PC-3 (cell line): ENCODE measurements at regions of chr1 and their contacts with region 1.

Region 1: DNA sequence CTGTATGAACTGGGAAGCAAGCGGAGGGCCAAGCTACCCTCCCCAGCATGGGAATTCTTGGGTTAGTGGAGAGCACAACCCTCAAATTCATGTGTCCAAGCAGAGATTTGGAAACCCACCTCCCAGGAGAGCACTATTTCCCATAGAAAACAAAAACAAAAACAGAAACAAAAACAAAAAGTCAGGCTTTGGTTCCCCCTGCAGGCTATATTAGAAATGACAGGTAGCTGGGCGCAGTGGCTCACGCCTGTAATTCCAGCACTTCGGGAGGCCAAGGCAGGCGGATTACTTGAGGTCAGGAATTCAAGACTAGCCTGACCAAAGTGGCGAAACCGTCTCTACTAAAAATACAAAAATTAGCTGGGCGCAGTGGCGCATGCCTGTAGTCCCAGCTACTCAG is 10.8 kb downstream of the MINDY1 start:
- DNase-seq: peak; percentile 58
- ATAC-seq: peak; percentile 35
- H3K4me3 ChIP-seq: no peak overlapping the region
- H3K27ac ChIP-seq: no peak overlapping the region
- H3K4me1 ChIP-seq: peaks cover 22% of the 10 kb centered on the region
- H3K27me3 ChIP-seq: no peaks in the 10 kb centered on the region
- CTCF ChIP-seq: peak; percentile 86

Region 2: DNA sequence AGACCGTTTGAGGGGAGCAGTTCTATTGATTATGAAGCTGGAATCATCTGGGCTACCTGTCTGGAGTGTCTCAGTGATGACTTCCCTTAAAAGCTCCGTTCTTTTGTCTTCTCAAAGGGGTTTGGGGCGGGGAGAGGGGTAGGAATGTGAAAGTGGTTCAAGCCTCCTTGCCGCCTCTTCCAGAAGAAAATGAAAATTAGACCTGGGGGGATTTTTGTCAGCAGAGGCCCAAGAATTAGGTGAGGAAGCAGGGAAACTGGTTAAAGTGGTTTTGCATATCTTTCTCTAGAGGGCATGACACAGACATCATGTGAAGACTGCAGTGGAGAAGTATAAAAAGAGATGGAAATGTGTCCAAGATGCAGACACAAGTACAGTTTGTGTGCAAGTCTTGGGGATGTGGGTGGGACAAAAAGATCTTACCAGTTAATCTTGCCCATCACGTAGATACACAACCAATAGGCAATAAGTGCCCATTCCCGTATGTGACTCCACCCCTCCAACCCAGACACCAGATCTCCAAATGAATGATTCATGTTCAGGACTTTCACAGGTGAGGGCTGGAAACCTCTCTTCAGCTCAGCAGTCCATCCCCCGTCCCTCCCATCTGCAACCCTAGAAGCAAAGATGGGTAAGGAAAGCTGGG is 1058.7 kb before region 1 on chr1:
- CTCF ChIA-PET with region 1: no interaction called
- POLR2A ChIA-PET with region 1: no interaction called
- intact Hi-C with region 1: no loop called
- DNase-seq: peak; percentile 96
- ATAC-seq: peak; percentile 71
- H3K4me3 ChIP-seq: peak overlapping the region; percentile 75
- H3K27ac ChIP-seq: peak overlapping the region; percentile 90
- H3K4me1 ChIP-seq: peaks cover 43% of the 10 kb centered on the region
- H3K27me3 ChIP-seq: no peaks in the 10 kb centered on the region
- CTCF ChIP-seq: 0 out of 2 replicates have a peak, but pooled peaks have one; percentile 16

Region 3: GRCh38 chr1:150321826-150322166 is 674.1 kb before region 1 on chr1:
- CTCF ChIA-PET with region 1: no interaction called
- POLR2A ChIA-PET with region 1: interaction called, 15 read pairs
- intact Hi-C with region 1: no loop called
- DNase-seq: no peak
- ATAC-seq: no peak
- H3K4me3 ChIP-seq: peak overlapping the region; percentile 85
- H3K27ac ChIP-seq: peak overlapping the region; percentile 80
- H3K4me1 ChIP-seq: peaks cover 7% of the 10 kb centered on the region
- H3K27me3 ChIP-seq: no peaks in the 10 kb centered on the region
- CTCF ChIP-seq: no peak

Region 4: GRCh38 chr1:150561974-150562445 is 433.9 kb before region 1 on chr1:
- CTCF ChIA-PET with region 1: interaction called, 5 read pairs
- POLR2A ChIA-PET with region 1: no interaction called
- intact Hi-C with region 1: loop called (anchors 10 kb)
- DNase-seq: peak; percentile 91
- ATAC-seq: peak; percentile 68
- H3K4me3 ChIP-seq: peak overlapping the region; percentile 69
- H3K27ac ChIP-seq: peak overlapping the region; percentile 96
- H3K4me1 ChIP-seq: peaks cover 37% of the 10 kb centered on the region
- H3K27me3 ChIP-seq: no peaks in the 10 kb centered on the region
- CTCF ChIP-seq: no peak

Region 5: GRCh38 chr1:150909585-150910180 is 86.2 kb before region 1 on chr1:
- CTCF ChIA-PET with region 1: no interaction called
- POLR2A ChIA-PET with region 1: no interaction called
- intact Hi-C with region 1: no loop called
- DNase-seq: no peak
- ATAC-seq: no peak
- H3K4me3 ChIP-seq: no peak overlapping the region
- H3K27ac ChIP-seq: no peak overlapping the region
- H3K4me1 ChIP-seq: peaks cover 4% of the 10 kb centered on the region; the same call in 1 of the 2 replicates
- H3K27me3 ChIP-seq: no peaks in the 10 kb centered on the region
- CTCF ChIP-seq: no peak

Region 6: DNA sequence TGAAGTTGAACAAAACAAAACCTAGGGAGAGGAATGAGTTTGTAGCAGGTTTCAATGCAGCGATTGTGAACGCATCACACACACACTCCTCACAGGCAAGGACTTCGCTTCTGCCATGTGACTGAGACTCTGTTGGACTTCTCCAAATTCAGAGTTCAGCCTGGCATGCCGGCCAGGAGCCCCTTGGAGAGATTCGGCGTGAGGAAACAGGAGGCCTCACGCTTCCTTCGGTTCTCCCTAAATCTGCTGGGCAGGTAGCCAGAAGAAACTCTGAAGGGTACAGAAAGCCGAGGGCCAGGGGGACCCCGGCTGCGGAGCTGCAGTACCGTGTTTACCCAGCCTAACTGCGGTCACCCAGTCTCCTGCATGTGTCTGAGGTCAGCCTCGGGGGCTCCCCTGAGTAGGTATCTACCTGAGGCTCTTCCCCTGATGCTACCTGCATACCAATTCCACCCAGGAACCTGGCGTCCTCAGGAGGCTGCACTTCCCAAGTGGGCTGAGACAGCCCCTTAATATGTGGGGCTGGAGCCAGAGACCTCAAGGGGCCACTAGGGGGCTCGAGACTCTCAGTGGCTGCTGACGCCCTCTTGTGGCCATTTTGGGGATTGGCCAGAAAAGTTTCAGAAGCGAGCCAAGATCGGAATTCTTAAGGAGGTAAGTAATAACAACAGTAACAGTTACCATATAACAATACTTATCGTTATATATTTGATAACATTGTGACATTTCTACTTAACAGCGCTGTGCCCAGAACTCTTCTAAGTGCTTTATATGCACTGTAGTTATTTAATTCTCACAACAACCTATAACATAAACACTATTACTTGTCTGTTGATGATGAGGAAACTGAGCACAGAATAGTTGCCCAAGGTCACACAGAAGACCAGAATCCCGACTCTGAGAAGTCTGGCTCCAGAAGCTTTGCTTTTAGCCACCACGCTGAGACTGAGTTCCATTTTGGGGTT is 16.5 kb before region 1 on chr1:
- CTCF ChIA-PET with region 1: interaction called, 16 read pairs
- POLR2A ChIA-PET with region 1: no interaction called
- intact Hi-C with region 1: loop called (anchors 2 kb)
- DNase-seq: peak; percentile 99
- ATAC-seq: peak; percentile 13
- H3K4me3 ChIP-seq: no peak overlapping the region
- H3K27ac ChIP-seq: no peak overlapping the region
- H3K4me1 ChIP-seq: peaks cover 42% of the 10 kb centered on the region
- H3K27me3 ChIP-seq: no peaks in the 10 kb centered on the region
- CTCF ChIP-seq: peak; percentile 100

Region 7: DNA sequence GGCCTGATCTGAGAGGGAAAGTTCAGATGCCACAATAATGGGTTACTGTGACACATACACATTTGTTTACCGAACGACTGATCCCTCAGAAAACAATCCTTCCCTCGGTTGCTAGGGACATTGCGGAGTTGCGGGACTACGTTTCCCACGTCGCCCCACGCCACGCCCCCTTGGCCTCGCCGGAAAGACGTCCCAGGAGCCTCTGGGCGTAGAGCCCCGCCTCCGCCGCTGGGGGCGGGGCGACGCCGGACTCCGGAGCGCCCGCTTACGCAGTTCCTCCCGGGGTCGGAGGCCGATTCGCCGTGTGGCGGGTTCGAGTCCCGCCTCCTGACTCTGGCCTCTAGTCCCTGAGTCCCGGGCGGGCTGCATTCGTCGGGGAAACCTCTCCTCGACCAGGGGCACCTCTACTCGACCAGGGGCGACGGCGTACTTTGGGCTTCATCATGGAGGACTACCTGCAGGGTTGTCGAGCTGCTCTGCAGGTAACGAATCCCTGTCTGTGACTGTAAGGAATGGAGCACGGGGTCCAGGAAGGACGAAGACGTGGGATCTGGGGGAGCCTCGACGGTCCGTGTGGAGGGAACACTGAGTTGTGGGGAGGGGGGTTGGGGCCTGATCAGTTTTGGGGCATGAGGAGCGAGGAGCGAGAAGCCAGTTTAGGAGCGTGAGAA is 12.4 kb after region 1 on chr1 and contains the start of gene PRUNE1:
- CTCF ChIA-PET with region 1: interaction called, 17 read pairs
- POLR2A ChIA-PET with region 1: no interaction called
- intact Hi-C with region 1: no loop called
- DNase-seq: peak; percentile 100
- ATAC-seq: peak; percentile 83
- H3K4me3 ChIP-seq: peak within 1 kb of the TSS; percentile 86
- H3K27ac ChIP-seq: peak within 1 kb of the TSS; percentile 82
- H3K4me1 ChIP-seq: peaks cover 37% of the 10 kb centered on the region
- H3K27me3 ChIP-seq: no peaks in the 10 kb centered on the region
- CTCF ChIP-seq: no peak
- total RNA-seq, gene PRUNE1: 19.4 and 20.3 TPM in 2 replicates